MCF 10A (cell line): ENCODE measurements at regions of chr16 and their contacts with region 1.

Region 1: DNA sequence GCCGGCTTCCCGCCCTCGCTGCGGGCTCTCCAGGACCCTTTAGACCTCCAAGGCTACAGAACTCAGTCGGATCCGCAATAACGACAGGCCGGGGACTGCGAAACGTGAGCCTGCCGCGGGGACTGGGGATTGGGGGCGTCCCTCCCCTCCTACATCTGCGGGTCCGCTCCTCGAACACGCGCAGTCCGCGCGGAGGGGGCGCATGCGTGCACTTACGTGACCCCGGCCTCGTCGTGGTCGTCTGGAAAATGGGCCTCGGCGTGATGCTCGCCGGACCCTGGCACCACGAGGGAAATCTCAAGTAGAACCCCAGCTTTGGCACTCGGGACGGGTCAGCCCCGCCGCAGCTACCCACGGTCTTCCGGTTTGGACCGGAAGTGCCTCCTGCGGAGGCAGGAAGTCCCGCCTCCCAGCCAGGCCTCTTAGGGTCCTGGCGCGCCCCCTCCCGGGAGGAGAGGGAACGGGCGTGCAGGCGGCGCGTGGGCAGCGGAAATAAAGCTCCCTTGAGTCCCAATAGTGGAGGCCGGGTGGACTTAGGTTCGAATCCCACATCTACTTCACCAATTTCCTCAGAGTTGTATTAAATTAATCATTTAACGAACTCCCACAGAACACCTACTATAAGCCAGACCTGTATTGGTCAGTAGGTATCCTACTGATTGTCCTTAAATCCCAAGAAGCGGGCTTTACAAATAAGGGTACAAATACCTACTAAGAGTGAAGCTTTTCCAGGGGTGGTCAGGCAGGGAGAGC is at the start of gene TAF1C:
- DNase-seq: peak; percentile 92
- H3K4me3 Mint-ChIP-seq: peak within 1 kb of the TSS; percentile 87
- H3K27ac Mint-ChIP-seq: peak within 1 kb of the TSS; percentile 69
- H3K4me1 Mint-ChIP-seq: peaks cover 14% of the 10 kb centered on the region
- H3K27me3 Mint-ChIP-seq: no peaks in the 10 kb centered on the region
- CTCF ChIP-seq: peak; percentile 89
- total RNA-seq, gene TAF1C: 29.3 and 35.1 TPM in 2 replicates

Region 2: DNA sequence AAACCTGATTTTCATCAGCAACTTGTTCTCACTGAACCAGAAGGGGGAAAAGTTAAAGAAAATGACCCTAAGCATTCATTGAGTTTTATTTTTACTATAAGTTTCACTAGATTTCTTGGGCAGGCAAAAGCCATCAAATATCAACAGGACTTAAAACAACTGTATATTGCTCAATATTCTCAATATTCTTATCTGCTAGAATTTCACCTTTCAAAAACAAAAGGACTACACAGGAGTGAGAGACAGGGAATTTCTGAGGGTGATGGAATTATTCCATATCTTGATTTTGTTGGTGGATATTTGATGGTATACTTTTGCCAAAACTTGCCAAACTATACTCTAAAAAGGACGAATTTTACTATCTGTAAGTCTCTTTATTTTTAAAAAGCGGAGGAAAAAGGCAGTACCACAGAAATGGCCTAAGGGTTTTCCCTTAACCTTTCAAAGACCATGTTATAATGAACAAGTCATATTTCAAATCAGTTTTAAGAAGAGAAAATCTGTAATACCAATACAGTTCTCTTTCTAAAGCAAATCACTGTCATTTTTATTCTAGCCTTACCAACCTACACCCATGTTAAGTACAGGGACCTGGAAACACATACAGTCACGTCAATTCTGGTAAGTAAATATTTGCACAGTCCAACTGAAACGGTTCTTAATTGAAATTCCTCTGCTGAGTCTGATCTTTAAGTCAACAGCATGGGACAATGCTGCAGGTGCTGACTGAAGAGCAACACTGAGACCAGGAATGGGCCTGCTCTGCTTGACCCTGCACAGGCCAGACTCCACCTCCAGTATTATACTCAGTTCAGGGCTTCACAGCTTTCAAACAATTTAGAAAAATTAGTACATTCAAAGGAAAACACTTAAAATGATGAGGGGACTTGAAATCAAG is 90.5 kb before region 1 on chr16:
- CTCF ChIA-PET with region 1: interaction called, 10 read pairs
- POLR2A ChIA-PET with region 1: interaction called, 8 read pairs
- intact Hi-C with region 1: no loop called
- DNase-seq: no peak
- H3K4me3 Mint-ChIP-seq: no peak overlapping the region
- H3K27ac Mint-ChIP-seq: no peak overlapping the region
- H3K4me1 Mint-ChIP-seq: no peaks in the 10 kb centered on the region
- H3K27me3 Mint-ChIP-seq: no peaks in the 10 kb centered on the region
- CTCF ChIP-seq: no peak